PC-9 (cell line): ENCODE measurements at regions of chr4 and their contacts with region 1.

Region 1: GRCh38 chr4:41160012-41160789 is 54.1 kb downstream of the APBB2 start:
- DNase-seq: peak; percentile 83 to 85
- H3K4me3 ChIP-seq: no peak overlapping the region; the same call in 1 of the 2 replicates
- H3K27ac ChIP-seq: peak overlapping the region; percentile 80
- H3K4me1 ChIP-seq: peaks cover 27% of the 10 kb centered on the region
- H3K27me3 ChIP-seq: no peaks in the 10 kb centered on the region
- CTCF ChIP-seq: no peak

Region 2: DNA sequence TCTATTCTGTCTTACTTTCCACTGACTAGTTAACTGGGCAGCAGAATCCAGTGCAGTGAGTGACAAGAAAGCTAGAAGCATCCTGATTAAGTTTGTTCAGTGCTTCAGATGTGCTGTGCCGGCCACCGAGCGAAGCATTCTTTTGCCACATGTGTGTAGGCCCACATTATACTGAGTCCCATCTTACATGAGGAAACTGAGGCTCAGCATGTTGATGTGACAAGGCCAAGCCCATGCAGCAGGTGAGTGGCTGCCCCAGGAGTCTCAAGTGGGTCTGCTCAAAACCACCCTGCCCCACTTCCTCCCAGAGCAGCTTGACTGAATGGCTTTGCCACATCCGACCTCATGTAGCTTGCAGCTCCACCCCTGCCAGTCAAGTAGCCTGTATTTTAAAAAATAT is 912.9 kb before region 1 on chr4:
- CTCF ChIA-PET with region 1: no interaction called
- POLR2A ChIA-PET with region 1: no interaction called
- intact Hi-C with region 1: no loop called
- DNase-seq: no peak
- H3K4me3 ChIP-seq: no peak overlapping the region
- H3K27ac ChIP-seq: no peak overlapping the region
- H3K4me1 ChIP-seq: 0 out of 2 replicates have a peak, but pooled peaks cover 10% of the 10 kb centered on the region
- H3K27me3 ChIP-seq: no peaks in the 10 kb centered on the region
- CTCF ChIP-seq: no peak

Region 3: GRCh38 chr4:40576631-40577480 is 583.3 kb before region 1 on chr4:
- CTCF ChIA-PET with region 1: no interaction called
- POLR2A ChIA-PET with region 1: no interaction called
- intact Hi-C with region 1: no loop called
- DNase-seq: peak; percentile 76 to 97
- H3K4me3 ChIP-seq: peak overlapping the region; percentile 28; the same call in 1 of the 2 replicates
- H3K27ac ChIP-seq: peak overlapping the region; percentile 81
- H3K4me1 ChIP-seq: peaks cover 49% of the 10 kb centered on the region
- H3K27me3 ChIP-seq: no peaks in the 10 kb centered on the region
- CTCF ChIP-seq: no peak

Region 4: DNA sequence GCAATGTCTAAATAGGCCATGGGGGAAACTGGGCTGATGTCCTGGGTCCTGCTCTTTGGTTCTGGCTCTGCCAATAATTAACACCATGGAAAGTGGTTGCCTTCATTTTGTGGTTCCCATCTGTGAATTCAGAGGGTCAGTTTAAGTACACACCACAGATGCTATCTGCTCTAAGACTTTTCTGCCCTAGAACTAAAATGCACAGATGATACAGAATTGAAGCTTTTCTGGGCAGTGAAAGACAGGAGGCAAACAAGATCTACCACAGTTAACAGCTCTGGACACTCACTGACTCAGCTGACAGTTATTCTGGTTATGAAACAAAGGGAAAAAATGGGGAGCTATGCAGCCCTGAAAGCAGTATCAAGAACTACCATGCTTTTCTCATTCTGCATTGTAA is 16.8 kb after region 1 on chr4:
- CTCF ChIA-PET with region 1: interaction called, 3 read pairs
- POLR2A ChIA-PET with region 1: interaction called, 3 read pairs
- intact Hi-C with region 1: loop called (anchors 2 kb)
- DNase-seq: peak; percentile 25 to 57
- H3K4me3 ChIP-seq: no peak overlapping the region
- H3K27ac ChIP-seq: no peak overlapping the region
- H3K4me1 ChIP-seq: peaks cover 24% of the 10 kb centered on the region; the same call in 1 of the 2 replicates
- H3K27me3 ChIP-seq: no peaks in the 10 kb centered on the region
- CTCF ChIP-seq: 0 out of 2 replicates have a peak, but pooled peaks have one; percentile 21

Region 5: DNA sequence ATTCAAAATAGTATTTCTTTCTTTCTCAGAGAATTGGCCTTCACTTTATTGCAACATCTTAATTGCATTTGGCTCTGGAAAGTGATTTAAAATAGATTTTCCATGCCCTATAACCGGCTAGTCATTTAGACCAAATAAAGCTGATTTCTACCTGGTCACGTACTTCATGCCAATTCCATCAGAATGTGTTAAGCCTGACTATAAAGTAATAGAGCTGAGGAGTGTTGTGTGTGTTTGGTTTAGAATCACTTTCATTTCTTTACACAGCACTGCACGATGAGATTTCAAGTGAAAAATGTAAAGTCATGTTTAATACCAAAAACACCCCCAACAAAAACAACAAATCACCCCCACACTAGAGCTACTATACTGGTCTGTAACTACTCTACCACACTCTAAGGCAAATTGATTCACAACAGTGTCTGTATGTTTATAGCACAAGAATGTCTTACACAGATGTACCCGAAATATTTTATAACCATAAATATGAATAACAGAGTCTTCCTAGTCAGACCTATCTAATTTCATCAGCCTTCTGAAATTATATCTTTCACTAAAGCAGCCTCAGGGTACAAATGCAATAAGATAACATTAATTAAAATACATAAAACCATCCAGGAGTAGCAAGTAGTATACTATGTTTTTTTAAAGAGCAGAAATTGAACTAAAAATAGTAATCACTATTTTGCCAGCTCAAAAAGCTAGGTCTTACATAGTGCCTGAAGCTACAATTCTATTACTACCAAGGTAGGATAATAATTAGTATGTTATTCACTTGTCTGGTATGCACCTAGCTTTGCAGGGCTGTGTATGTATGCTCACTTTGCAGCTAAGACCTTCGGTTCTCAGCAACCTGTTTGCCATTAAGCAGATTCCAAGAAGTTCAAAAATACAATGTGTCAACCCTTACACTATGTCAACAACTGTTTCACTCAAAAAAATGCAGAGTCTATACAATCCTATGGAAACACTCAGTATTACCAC is 25.7 kb after region 1 on chr4:
- CTCF ChIA-PET with region 1: no interaction called
- POLR2A ChIA-PET with region 1: interaction called, 14 read pairs
- intact Hi-C with region 1: no loop called
- DNase-seq: peak; percentile 24 to 90
- H3K4me3 ChIP-seq: 0 out of 2 replicates have a peak overlapping the region, but pooled peaks have one; percentile 15
- H3K27ac ChIP-seq: peak overlapping the region; percentile 67
- H3K4me1 ChIP-seq: peaks cover 38% of the 10 kb centered on the region
- H3K27me3 ChIP-seq: no peaks in the 10 kb centered on the region
- CTCF ChIP-seq: no peak

Region 6: GRCh38 chr4:41448934-41449333 is 288.7 kb after region 1 on chr4:
- CTCF ChIA-PET with region 1: no interaction called
- POLR2A ChIA-PET with region 1: interaction called, 13 read pairs
- intact Hi-C with region 1: no loop called
- DNase-seq: no peak
- H3K4me3 ChIP-seq: no peak overlapping the region
- H3K27ac ChIP-seq: no peak overlapping the region
- H3K4me1 ChIP-seq: no peaks in the 10 kb centered on the region; the same call in 1 of the 2 replicates
- H3K27me3 ChIP-seq: no peaks in the 10 kb centered on the region
- CTCF ChIP-seq: no peak